ENCODE measurements at regions of chr9 and their contacts with region 1.

Region 1: GRCh38 chr9:84697509-84698114 is 28.1 kb downstream of the NTRK2 start:
- DNase-seq: peak; percentile 19 to 78
- H3K4me3 ChIP-seq: no peak overlapping the region
- H3K4me1 ChIP-seq: no peaks in the 10 kb centered on the region
- H3K27me3 ChIP-seq: no peaks in the 10 kb centered on the region; the same call in 1 of the 2 replicates

Region 2: GRCh38 chr9:84874596-84874995 is 177.0 kb after region 1 on chr9:
- in situ Hi-C with region 1: no loop called
- DNase-seq: no peak
- H3K4me3 ChIP-seq: no peak overlapping the region
- H3K4me1 ChIP-seq: no peaks in the 10 kb centered on the region
- H3K27me3 ChIP-seq: no peaks in the 10 kb centered on the region

Region 3: DNA sequence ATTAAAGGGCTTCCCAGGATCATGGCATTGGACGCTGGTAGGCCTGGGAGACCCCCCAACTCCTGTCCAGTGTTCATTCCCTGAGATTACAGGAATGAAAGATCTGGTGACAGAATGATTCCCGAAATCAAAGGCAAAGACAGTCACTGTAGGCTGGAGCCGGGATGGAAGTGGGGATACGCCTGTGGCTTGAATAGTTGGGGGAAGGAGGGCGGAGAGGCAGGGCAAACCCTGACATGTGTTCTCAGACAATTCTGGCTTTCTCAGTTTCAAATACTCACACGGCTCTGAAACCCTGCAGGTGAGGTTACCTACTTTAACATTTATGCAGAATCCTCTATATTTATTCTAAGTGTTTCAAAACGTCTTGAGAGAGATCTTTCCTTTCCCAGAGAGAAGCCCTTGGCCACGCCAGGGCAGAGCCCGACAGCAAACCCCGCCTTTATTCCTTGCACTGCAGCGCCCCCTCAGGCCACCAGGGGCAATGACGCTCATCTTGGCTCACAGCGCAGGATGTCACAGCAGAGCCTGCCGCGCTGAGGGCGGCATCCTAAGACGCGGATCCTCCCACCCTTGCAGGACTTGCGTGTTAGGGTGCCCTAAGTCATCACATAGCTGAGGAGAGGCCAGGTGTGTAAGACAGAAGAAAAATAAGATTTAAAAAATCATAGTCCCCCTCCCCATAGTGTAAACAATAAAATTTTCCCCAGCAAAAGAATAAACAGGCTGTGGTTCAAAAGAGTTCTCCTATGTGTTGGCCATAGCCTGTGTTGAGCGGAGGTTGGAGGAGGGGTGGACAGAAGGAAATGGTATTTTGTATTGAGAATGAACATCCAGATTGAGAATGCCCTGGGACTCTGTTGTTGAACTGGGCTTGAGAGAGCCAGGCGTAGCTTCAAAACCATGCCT is 256.4 kb after region 1 on chr9:
- in situ Hi-C with region 1: loop called (anchors 10 kb)
- DNase-seq: peak; percentile 61 to 84
- H3K4me3 ChIP-seq: no peak overlapping the region
- H3K4me1 ChIP-seq: no peaks in the 10 kb centered on the region
- H3K27me3 ChIP-seq: no peaks in the 10 kb centered on the region

Region 4: GRCh38 chr9:85258823-85259370 is 561.3 kb after region 1 on chr9:
- in situ Hi-C with region 1: loop called (anchors 25 kb)
- DNase-seq: peak; percentile 47 to 69
- H3K4me3 ChIP-seq: no peak overlapping the region
- H3K4me1 ChIP-seq: no peaks in the 10 kb centered on the region
- H3K27me3 ChIP-seq: no peaks in the 10 kb centered on the region

Measured in HAP-1 (cell line).